Spleen (tissue), 13 donors: ENCODE measurements at regions of chr3 and their contacts with region 1.

Region 1: DNA sequence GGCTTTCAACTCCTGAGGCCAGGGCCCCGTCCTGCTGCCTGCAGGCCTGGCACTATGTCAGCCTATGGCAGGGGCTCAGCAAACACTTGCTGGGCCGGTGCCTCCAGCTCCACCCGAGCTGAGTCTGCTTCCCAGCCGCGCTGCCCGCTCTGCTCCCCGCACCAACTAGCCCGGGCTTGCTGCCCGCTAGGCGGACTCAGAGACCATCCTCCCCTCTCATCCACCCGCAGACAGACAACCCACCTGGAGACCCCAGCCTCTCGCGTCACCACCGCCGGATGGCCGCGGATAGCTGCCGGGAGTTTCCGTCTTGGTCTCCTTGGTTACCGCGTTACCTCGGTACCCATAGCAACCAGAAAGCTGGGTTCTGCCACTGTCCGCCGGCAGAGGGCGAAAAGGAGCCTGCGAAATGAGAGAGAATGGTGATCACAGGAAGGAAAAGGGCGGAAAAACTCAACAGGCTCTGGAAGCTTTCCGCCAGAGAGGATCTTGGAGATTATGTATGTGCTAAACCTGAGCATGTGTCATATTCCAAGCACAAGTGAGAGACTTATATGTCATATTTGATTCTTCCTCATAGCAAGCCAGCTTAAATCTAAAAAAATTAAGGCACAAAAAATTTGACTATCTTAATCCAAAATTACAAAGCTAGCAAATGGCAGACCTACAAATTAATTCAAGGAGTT is at the start of gene ZBBX:
- DNase-seq: peak; percentile 92
- H3K4me3 ChIP-seq: peak within 1 kb of the TSS in 7 of 8 donors; percentile 26 to 67 (median 35)
- H3K27ac ChIP-seq: no peak within 1 kb of the TSS
- H3K4me1 ChIP-seq: peaks cover 0 to 9% (median 7%) of the 10 kb centered on the region in 6 donors
- H3K27me3 ChIP-seq: peaks cover 0 to 8% (median 0%) of the 10 kb centered on the region in 7 donors
- CTCF ChIP-seq: peak; percentile 74 to 93 (median 84)
- POLR2A ChIP-seq: no peak
- total RNA-seq, gene ZBBX: 0.46 TPM in 1 of 7 donors, not detected in the others

Region 2: GRCh38 chr3:167882067-167882667 is 502.0 kb after region 1 on chr3:
- intact Hi-C with region 1: loop called (anchors 10 kb)
- DNase-seq: no peak
- H3K4me3 ChIP-seq: peak overlapping the region in 1 of 8 donors; percentile 23
- H3K27ac ChIP-seq: no peak overlapping the region
- H3K4me1 ChIP-seq: peaks cover 0 to 12% (median 8%) of the 10 kb centered on the region in 6 donors
- H3K27me3 ChIP-seq: no peaks in the 10 kb centered on the region
- CTCF ChIP-seq: peak; percentile 10 to 67 (median 53)
- POLR2A ChIP-seq: no peak